Posterior cingulate gyrus (tissue), 11 donors: ENCODE measurements at regions of chr3 and their contacts with region 1.

Region 1: DNA sequence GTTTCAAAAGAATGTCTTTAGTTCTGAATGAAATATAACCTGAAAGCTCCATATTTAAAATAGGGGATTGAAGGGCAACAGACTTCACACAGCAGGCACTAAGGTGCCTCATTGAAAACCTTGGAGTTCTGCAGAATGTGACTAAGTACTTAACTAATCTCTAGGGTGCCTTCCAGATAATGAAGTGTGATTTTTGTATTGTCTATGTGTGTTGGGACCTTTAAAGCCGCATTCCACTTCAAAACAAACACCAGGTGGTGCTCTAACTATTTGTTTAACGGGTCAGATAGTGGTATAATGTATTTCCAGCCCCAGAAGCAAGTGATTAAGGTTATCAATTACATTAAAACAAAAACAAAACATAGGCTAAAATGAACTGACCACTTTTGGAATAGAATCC is 28.0 kb downstream of the TFG start:
- DNase-seq: no peak

Region 2: DNA sequence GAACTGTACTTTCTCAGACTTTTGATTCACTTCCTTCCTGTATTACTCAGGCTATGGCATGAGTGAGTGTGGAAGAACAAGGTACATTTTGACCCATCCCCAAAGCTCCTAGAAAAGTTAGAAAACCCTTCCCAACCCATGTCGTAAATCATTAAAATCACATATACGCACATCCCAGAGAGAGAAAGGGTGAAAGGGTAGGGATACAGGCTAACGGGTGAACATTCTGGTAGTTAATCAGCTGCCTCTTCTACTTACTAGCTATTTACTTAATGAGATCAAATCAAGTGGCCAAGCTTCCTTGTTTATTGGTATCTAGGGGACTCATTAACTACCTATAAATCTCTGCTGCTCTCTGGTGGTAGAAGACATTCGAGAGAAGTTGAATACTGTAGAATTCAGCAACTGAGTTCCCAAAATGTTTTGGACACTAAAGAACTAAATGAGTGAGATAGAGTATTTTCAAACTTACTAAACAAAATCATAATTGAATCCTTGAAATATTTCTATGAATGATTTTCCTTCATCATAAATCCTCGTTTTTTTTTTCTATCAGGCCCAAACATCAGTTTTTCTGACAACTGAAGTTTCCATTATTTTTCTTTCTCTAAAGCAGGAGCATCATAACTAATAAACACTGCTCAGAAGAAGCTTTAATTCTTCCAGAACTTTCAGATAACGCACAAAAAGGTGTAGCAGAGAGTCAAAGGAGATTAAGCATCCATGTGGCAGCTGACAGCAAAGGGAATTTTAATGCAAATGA is 458.8 kb after region 1 on chr3:
- intact Hi-C with region 1: loop called (anchors 2 kb)
- DNase-seq: no peak